A549 (cell line): ENCODE measurements at regions of chr17 and their contacts with region 1.

Region 1: DNA sequence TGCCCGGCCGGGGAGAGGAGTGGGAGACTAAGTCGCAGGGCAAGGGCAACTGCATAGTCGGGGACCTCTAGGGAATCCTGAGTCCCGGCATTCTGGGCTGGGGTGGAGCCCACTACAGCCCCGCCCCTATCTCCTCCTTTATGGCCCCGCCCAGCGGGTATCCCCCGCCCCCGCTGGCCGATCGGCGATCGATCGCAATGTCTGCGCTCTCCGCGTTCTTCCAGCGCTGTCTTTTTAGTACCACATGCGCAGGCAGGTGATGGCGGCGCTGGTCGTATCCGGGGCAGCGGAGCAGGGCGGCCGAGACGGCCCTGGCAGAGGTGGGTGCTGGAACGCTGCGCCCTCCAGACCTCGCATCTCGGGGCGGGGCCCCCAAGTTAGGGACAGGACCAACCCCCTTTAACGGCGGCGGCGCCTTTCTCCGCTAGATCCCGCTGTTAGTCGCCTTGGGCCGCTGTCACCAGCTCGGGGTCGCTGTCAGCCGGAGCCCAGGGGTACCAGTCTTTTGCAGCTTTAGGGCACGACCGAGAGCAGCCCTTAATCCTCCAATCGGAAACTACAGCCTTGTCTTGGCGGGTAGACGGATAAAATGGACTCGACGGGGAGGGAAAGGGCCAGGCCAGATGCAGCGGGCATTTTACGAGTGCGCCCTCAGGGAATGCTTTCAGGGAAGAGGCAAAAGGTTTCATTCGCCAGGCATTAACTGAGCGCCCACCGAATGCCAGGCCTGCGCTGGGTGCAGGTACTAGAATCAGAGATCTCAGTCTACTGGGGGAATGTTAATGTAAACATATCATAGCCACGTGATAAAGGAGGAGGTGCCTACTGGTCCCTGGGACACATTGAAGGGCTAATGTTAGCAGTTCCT is at the start of gene DPH1:
- DNase-seq: peak; percentile 91 to 99
- ATAC-seq: peak; percentile 83 to 93
- H3K4me3 ChIP-seq: peak within 1 kb of the TSS; percentile 80
- H3K27ac ChIP-seq: peak within 1 kb of the TSS; percentile 71 to 90
- H3K4me1 ChIP-seq: peaks cover 19% of the 10 kb centered on the region
- CTCF ChIP-seq: no peak
- EP300 ChIP-seq: no peak
- POLR2A ChIP-seq: peak; percentile 64
- RAD21 ChIP-seq: peak in 1 of 2 experiments; percentile 9; a peak in 3 of 5 replicates
- polyA plus RNA-seq, gene DPH1: 25.5 and 33.0 TPM in 2 replicates

Region 2: DNA sequence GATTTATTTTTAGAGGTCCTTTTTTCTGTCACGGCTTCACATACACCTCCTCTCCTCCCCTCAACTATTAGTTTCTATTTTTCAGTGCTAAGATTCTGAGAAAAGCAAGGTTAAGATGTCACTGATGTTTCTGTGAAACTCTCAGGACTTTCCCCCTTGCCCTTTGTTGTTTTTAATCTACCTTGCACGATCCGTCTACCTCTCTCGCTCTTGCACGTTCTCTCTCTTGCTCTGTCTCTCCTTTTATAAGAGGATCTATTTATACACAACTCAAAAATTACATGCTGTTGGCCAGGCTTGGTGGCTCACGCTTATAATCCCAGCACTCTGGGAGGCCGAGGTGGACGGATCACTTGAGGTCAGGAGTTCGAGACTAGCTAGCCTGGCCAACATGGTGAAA is 156.7 kb before region 1 on chr17:
- CTCF ChIA-PET with region 1: interaction called, 213 read pairs
- POLR2A ChIA-PET with region 1: no interaction called
- DNase-seq: no peak
- ATAC-seq: no peak
- H3K4me3 ChIP-seq: no peak overlapping the region
- H3K27ac ChIP-seq: no peak overlapping the region
- H3K4me1 ChIP-seq: no peaks in the 10 kb centered on the region
- CTCF ChIP-seq: no peak
- EP300 ChIP-seq: no peak
- POLR2A ChIP-seq: no peak
- RAD21 ChIP-seq: no peak

Region 3: GRCh38 chr17:1908699-1909309 is 121.3 kb before region 1 on chr17:
- CTCF ChIA-PET with region 1: interaction called, 420 read pairs
- POLR2A ChIA-PET with region 1: interaction called, 23 read pairs
- DNase-seq: peak; percentile 81 to 85
- ATAC-seq: peak; percentile 88 to 96
- H3K4me3 ChIP-seq: no peak overlapping the region
- H3K27ac ChIP-seq: peak overlapping the region in 1 of 2 experiments; percentile 33; a peak in 1 of 6 replicates
- H3K4me1 ChIP-seq: peaks cover 9% of the 10 kb centered on the region; the same call in 1 of the 3 replicates
- CTCF ChIP-seq: peak; percentile 95
- EP300 ChIP-seq: no peak
- POLR2A ChIP-seq: no peak
- RAD21 ChIP-seq: peak; percentile 97

Region 4: GRCh38 chr17:1931759-1932579 is 98.2 kb before region 1 on chr17:
- CTCF ChIA-PET with region 1: interaction called, 18 read pairs
- POLR2A ChIA-PET with region 1: no interaction called
- DNase-seq: no peak
- ATAC-seq: no peak
- H3K4me3 ChIP-seq: no peak overlapping the region
- H3K27ac ChIP-seq: no peak overlapping the region
- H3K4me1 ChIP-seq: no peaks in the 10 kb centered on the region
- CTCF ChIP-seq: no peak
- EP300 ChIP-seq: no peak
- POLR2A ChIP-seq: no peak
- RAD21 ChIP-seq: no peak

Region 5: DNA sequence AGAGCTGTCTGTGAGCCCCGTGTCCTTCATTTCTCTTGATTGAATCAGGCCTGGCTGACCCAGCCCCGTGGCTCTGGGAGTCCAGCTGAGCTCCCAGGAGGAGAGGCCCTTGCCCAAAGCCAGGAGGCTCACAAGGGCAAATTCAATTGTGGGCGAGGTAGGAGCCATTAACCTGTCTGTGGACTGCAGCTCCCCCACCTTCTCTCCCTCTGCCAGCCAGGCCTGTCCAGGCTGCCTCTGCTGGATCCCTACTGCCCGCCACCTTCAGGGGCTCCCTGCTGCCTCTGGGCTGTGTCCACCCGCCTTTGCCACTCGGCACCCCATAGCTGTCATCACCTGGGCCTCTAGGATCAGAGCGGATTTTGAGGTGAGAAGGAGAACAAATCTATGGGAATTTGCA is 66.9 kb before region 1 on chr17:
- CTCF ChIA-PET with region 1: interaction called, 11 read pairs
- POLR2A ChIA-PET with region 1: no interaction called
- DNase-seq: no peak
- ATAC-seq: peak in 1 of 2 experiments; percentile 14; a peak in 2 of 6 replicates
- H3K4me3 ChIP-seq: no peak overlapping the region
- H3K27ac ChIP-seq: no peak overlapping the region
- H3K4me1 ChIP-seq: no peaks in the 10 kb centered on the region
- CTCF ChIP-seq: no peak
- EP300 ChIP-seq: no peak
- POLR2A ChIP-seq: no peak
- RAD21 ChIP-seq: no peak

Region 6: GRCh38 chr17:1989135-1989534 is 41.0 kb before region 1 on chr17:
- CTCF ChIA-PET with region 1: interaction called, 81 read pairs
- POLR2A ChIA-PET with region 1: no interaction called
- DNase-seq: peak; percentile 55
- ATAC-seq: peak; percentile 84 to 88
- H3K4me3 ChIP-seq: no peak overlapping the region
- H3K27ac ChIP-seq: peak overlapping the region; percentile 64 to 83
- H3K4me1 ChIP-seq: peaks cover 21% of the 10 kb centered on the region
- CTCF ChIP-seq: no peak
- EP300 ChIP-seq: no peak
- POLR2A ChIP-seq: no peak
- RAD21 ChIP-seq: no peak

Region 7: DNA sequence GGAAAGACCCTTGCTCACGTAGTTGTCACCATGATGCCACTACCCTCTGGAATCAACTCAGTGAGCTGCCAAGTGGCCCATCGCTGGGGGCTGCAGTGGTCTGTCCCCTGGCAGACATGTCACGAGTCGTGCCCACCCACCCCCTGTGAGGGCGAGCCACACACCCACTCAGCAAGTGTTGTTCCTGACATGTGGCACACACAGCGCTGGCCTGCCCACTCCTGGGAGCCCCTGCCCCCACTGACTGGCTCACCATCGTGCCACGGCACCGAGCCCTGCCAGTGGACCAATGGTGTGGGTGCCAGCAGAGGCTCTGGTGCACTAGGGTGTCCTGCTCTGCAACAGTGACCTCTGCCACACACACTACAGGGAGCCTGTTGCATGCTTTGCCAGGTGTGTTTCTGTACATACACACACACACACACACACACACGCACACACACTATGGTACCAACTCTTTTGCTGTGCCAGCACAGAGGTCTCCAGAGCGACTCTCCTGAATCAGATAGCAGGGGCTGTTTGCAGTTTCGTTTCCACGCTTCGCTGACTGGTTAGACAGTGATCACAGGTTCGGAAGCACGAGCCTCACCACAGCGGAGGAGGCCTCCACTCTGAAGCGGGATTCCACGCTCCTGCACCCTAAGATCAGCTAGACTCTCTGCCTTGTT is 12.7 kb before region 1 on chr17:
- CTCF ChIA-PET with region 1: interaction called, 224 read pairs
- POLR2A ChIA-PET with region 1: no interaction called
- DNase-seq: no peak
- ATAC-seq: peak in 1 of 2 experiments; percentile 13; a peak in 3 of 6 replicates
- H3K4me3 ChIP-seq: no peak overlapping the region
- H3K27ac ChIP-seq: no peak overlapping the region
- H3K4me1 ChIP-seq: no peaks in the 10 kb centered on the region
- CTCF ChIP-seq: no peak
- EP300 ChIP-seq: no peak
- POLR2A ChIP-seq: no peak
- RAD21 ChIP-seq: no peak